CD8-positive, alpha-beta T cell (primary cell): ENCODE measurements at regions of chr20 and their contacts with region 1.

Region 1: GRCh38 chr20:53883098-53883811 is 187.1 kb downstream of the BCAS1 start:
- DNase-seq: no peak
- ATAC-seq: no peak
- H3K4me3 ChIP-seq: no peak overlapping the region
- H3K4me3 Mint-ChIP-seq: no peak overlapping the region
- H3K27ac ChIP-seq: no peak overlapping the region
- H3K27ac Mint-ChIP-seq: peak overlapping the region; percentile 99
- H3K4me1 ChIP-seq: peaks cover 56% of the 10 kb centered on the region
- H3K4me1 Mint-ChIP-seq: peaks cover 60% of the 10 kb centered on the region
- H3K27me3 ChIP-seq: no peaks in the 10 kb centered on the region
- H3K27me3 Mint-ChIP-seq: no peaks in the 10 kb centered on the region
- CTCF ChIP-seq: no peak

Region 2: DNA sequence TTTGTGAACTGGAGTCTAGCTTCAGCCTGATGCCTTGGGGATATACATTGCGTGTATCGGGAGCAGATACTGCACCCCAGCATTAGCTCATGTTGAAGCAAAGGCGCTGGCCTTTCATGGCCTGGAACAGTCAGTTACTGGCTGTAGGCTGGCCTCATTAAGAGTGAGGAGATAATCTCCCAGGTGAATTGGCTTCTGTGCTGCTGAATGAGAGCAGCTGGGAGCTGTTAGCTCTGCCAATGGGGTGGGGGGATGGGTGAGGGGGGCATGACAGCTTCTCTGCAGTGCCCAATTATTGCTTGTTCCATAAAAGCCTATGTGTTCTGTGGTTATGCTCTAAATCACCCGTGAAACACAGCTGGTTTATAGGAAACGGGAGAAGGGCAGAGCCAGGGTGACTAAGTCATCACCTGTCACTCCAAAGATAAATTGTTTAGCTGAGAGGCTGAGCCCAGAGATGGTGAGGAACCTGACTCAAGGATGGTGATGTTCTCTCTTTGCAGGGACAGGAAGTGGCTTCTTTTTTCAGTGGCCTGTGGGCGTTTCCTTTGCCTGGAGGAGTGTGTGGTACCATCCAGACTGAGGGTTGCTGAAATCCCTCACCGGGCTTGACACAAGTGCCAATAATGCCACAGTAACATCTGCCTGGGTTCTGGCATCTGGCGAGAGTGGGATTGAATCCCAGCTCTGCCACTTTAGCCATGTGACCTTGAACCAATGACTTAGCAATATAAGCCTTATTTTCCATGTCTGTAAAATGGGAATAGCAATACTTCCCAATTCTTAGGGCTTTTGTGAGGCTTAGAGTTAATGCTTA is 16.3 kb after region 1 on chr20:
- CTCF ChIA-PET with region 1: interaction called, 4 read pairs
- POLR2A ChIA-PET with region 1: interaction called, 24 read pairs
- intact Hi-C with region 1: loop called in 1 of 2 experiments (anchors 2 kb)
- DNase-seq: peak; percentile 32 to 84 (median 70)
- ATAC-seq: peak; percentile 91
- H3K4me3 ChIP-seq: peak overlapping the region in 1 of 2 experiments; percentile 9
- H3K4me3 Mint-ChIP-seq: peak overlapping the region; percentile 36
- H3K27ac ChIP-seq: peak overlapping the region; percentile 14 to 51
- H3K27ac Mint-ChIP-seq: peak overlapping the region; percentile 91
- H3K4me1 ChIP-seq: peaks cover 43% of the 10 kb centered on the region
- H3K4me1 Mint-ChIP-seq: peaks cover 55% of the 10 kb centered on the region
- H3K27me3 ChIP-seq: no peaks in the 10 kb centered on the region
- H3K27me3 Mint-ChIP-seq: no peaks in the 10 kb centered on the region
- CTCF ChIP-seq: no peak